Caco-2 (cell line): ENCODE measurements at regions of chr2 and their contacts with region 1.

Region 1: GRCh38 chr2:55136138-55136541 is 85.9 kb upstream of the RTN4 start:
- DNase-seq: peak in 1 of 2 experiments; percentile 56
- H3K4me3 ChIP-seq: no peak overlapping the region
- H3K4me3 Mint-ChIP-seq: no peak overlapping the region
- H3K27ac Mint-ChIP-seq: peak overlapping the region; percentile 60
- H3K4me1 ChIP-seq: peaks cover 45% of the 10 kb centered on the region
- H3K4me1 Mint-ChIP-seq: peaks cover 51% of the 10 kb centered on the region
- H3K27me3 ChIP-seq: no peaks in the 10 kb centered on the region
- H3K27me3 Mint-ChIP-seq: no peaks in the 10 kb centered on the region
- CTCF ChIP-seq: no peak

Region 2: GRCh38 chr2:55153584-55154295 is 17.6 kb after region 1 on chr2:
- CTCF ChIA-PET with region 1: no interaction called
- POLR2A ChIA-PET with region 1: interaction called, 6 read pairs
- intact Hi-C with region 1: loop called (anchors 1 kb)
- DNase-seq: no peak
- H3K4me3 ChIP-seq: no peak overlapping the region
- H3K4me3 Mint-ChIP-seq: no peak overlapping the region
- H3K27ac Mint-ChIP-seq: peak overlapping the region; percentile 82
- H3K4me1 ChIP-seq: peaks cover 59% of the 10 kb centered on the region
- H3K4me1 Mint-ChIP-seq: peaks cover 43% of the 10 kb centered on the region
- H3K27me3 ChIP-seq: no peaks in the 10 kb centered on the region
- H3K27me3 Mint-ChIP-seq: no peaks in the 10 kb centered on the region
- CTCF ChIP-seq: no peak

Region 3: DNA sequence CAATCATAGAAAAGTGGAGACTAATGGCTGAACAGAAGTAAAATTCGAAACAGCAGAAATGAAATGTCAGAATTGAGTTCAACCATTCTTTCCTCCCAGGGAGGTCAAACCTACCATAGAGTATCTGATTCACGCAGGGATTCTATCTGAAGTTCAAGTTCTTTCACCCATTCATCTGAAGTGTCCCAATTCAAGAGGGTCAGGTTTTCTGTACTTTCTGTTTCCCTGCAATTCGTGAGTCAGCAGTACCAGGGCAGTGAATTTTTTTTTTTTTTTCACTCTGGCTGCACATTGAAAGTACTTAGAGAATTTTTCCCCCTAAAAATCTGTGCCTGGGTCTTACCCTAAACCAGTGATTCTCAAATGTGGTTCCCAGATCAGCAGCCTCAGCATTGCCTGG is 324.4 kb after region 1 on chr2:
- CTCF ChIA-PET with region 1: no interaction called
- POLR2A ChIA-PET with region 1: no interaction called
- intact Hi-C with region 1: no loop called
- DNase-seq: no peak
- H3K4me3 ChIP-seq: no peak overlapping the region
- H3K4me3 Mint-ChIP-seq: no peak overlapping the region
- H3K27ac Mint-ChIP-seq: no peak overlapping the region
- H3K4me1 ChIP-seq: no peaks in the 10 kb centered on the region
- H3K4me1 Mint-ChIP-seq: no peaks in the 10 kb centered on the region
- H3K27me3 ChIP-seq: no peaks in the 10 kb centered on the region
- H3K27me3 Mint-ChIP-seq: peaks cover 15% of the 10 kb centered on the region
- CTCF ChIP-seq: no peak